ENCODE measurements at regions of chr4 and their contacts with region 1.

Region 1: GRCh38 chr4:142405021-142405694 is 440.9 kb downstream of the INPP4B start:
- DNase-seq: peak; percentile 2 to 80 (median 49)
- ATAC-seq: peak; percentile 63
- H3K4me3 ChIP-seq: peak overlapping the region; percentile 67 to 72
- H3K4me3 Mint-ChIP-seq: peak overlapping the region; percentile 91
- H3K27ac ChIP-seq: peak overlapping the region; percentile 53 to 79
- H3K27ac Mint-ChIP-seq: peak overlapping the region; percentile 97
- H3K4me1 ChIP-seq: peaks cover 63% of the 10 kb centered on the region
- H3K4me1 Mint-ChIP-seq: peaks cover 69% of the 10 kb centered on the region
- H3K27me3 ChIP-seq: no peaks in the 10 kb centered on the region
- H3K27me3 Mint-ChIP-seq: no peaks in the 10 kb centered on the region
- CTCF ChIP-seq: no peak

Region 2: DNA sequence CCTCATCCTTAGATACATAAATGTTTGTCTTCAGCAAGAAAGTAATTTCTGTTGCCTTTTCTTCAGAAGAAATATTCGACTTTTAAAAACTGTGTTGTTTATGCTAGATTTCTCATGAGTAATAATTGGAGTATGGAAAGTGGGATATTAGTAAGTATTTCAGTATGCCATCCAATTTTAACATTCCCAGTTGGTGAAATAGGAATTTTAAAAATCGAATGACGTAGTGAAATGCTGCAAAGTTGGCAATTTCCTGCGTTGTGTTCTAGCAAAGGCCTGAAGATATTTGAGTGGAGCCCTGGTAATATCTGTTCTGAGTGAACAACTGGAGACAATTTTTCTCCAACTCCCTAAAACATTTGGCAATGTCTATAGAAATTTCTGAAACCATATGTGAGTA is 994.3 kb before region 1 on chr4:
- CTCF ChIA-PET with region 1: no interaction called
- POLR2A ChIA-PET with region 1: no interaction called
- intact Hi-C with region 1: no loop called
- DNase-seq: no peak
- ATAC-seq: no peak
- H3K4me3 ChIP-seq: no peak overlapping the region
- H3K4me3 Mint-ChIP-seq: no peak overlapping the region
- H3K27ac ChIP-seq: no peak overlapping the region
- H3K27ac Mint-ChIP-seq: no peak overlapping the region
- H3K4me1 ChIP-seq: no peaks in the 10 kb centered on the region
- H3K4me1 Mint-ChIP-seq: no peaks in the 10 kb centered on the region
- H3K27me3 ChIP-seq: no peaks in the 10 kb centered on the region
- H3K27me3 Mint-ChIP-seq: no peaks in the 10 kb centered on the region
- CTCF ChIP-seq: no peak

Region 3: GRCh38 chr4:142222127-142222526 is 183.0 kb before region 1 on chr4:
- CTCF ChIA-PET with region 1: no interaction called
- POLR2A ChIA-PET with region 1: no interaction called
- intact Hi-C with region 1: no loop called
- DNase-seq: no peak
- ATAC-seq: no peak
- H3K4me3 ChIP-seq: no peak overlapping the region
- H3K4me3 Mint-ChIP-seq: no peak overlapping the region
- H3K27ac ChIP-seq: no peak overlapping the region
- H3K27ac Mint-ChIP-seq: no peak overlapping the region
- H3K4me1 ChIP-seq: no peaks in the 10 kb centered on the region
- H3K4me1 Mint-ChIP-seq: peaks cover 16% of the 10 kb centered on the region
- H3K27me3 ChIP-seq: no peaks in the 10 kb centered on the region
- H3K27me3 Mint-ChIP-seq: no peaks in the 10 kb centered on the region
- CTCF ChIP-seq: no peak

Region 4: GRCh38 chr4:142379277-142380057 is 25.7 kb before region 1 on chr4:
- CTCF ChIA-PET with region 1: interaction called, 8 read pairs
- POLR2A ChIA-PET with region 1: interaction called, 3 read pairs
- intact Hi-C with region 1: loop called in 1 of 2 experiments (anchors 2 kb)
- DNase-seq: no peak
- ATAC-seq: no peak
- H3K4me3 ChIP-seq: no peak overlapping the region
- H3K4me3 Mint-ChIP-seq: no peak overlapping the region
- H3K27ac ChIP-seq: no peak overlapping the region
- H3K27ac Mint-ChIP-seq: peak overlapping the region; percentile 83
- H3K4me1 ChIP-seq: peaks cover 48% of the 10 kb centered on the region
- H3K4me1 Mint-ChIP-seq: peaks cover 76% of the 10 kb centered on the region
- H3K27me3 ChIP-seq: no peaks in the 10 kb centered on the region
- H3K27me3 Mint-ChIP-seq: no peaks in the 10 kb centered on the region
- CTCF ChIP-seq: no peak

Region 5: GRCh38 chr4:142416711-142417275 is 11.6 kb after region 1 on chr4:
- CTCF ChIA-PET with region 1: interaction called, 11 read pairs
- POLR2A ChIA-PET with region 1: interaction called, 9 read pairs
- intact Hi-C with region 1: loop called in 1 of 2 experiments (anchors 1 kb)
- DNase-seq: peak in 2 of 9 experiments; percentile 39 to 64
- ATAC-seq: peak; percentile 91
- H3K4me3 ChIP-seq: no peak overlapping the region
- H3K4me3 Mint-ChIP-seq: peak overlapping the region; percentile 77
- H3K27ac ChIP-seq: peak overlapping the region; percentile 49 to 77
- H3K27ac Mint-ChIP-seq: peak overlapping the region; percentile 95
- H3K4me1 ChIP-seq: peaks cover 26% of the 10 kb centered on the region
- H3K4me1 Mint-ChIP-seq: peaks cover 45% of the 10 kb centered on the region
- H3K27me3 ChIP-seq: no peaks in the 10 kb centered on the region
- H3K27me3 Mint-ChIP-seq: no peaks in the 10 kb centered on the region
- CTCF ChIP-seq: no peak

Region 6: DNA sequence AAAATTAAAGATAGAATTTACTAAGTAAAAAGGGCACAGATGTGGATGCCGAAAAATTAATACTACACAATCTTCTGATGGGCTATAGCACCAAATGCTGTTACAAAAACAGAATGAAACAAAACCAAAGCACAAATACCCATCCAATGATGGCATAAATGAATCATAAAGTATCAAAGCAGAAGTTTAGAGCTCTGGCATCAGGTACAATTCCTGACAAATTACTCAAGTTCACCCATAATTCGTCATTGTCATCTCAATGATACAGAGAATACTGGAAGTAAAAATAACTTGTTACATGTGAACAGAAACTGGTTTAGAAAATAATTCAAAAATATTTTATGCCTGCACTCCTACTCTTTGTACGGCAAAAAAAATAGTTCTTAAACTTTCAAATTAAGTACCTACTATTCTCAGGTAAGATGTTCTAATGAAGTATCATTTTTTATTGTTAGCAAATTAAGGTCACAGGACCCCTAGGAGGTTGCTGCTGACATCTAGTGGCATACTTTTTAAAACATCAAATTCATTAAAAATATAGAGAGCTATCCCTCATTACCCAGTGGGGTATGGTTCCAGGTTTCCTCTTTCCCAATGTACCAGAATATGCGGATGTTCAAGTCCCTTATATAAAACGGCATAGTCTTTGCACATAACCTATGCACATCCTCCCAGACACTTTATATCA is 314.8 kb after region 1 on chr4:
- CTCF ChIA-PET with region 1: interaction called, 14 read pairs
- POLR2A ChIA-PET with region 1: no interaction called
- intact Hi-C with region 1: loop called in 1 of 2 experiments (anchors 5 kb)
- DNase-seq: peak in 2 of 9 experiments; percentile 48 to 56
- ATAC-seq: peak; percentile 49
- H3K4me3 ChIP-seq: no peak overlapping the region
- H3K4me3 Mint-ChIP-seq: no peak overlapping the region
- H3K27ac ChIP-seq: no peak overlapping the region
- H3K27ac Mint-ChIP-seq: no peak overlapping the region
- H3K4me1 ChIP-seq: peaks cover 3% of the 10 kb centered on the region
- H3K4me1 Mint-ChIP-seq: peaks cover 13% of the 10 kb centered on the region
- H3K27me3 ChIP-seq: no peaks in the 10 kb centered on the region
- H3K27me3 Mint-ChIP-seq: no peaks in the 10 kb centered on the region
- CTCF ChIP-seq: peak; percentile 69